ENCODE measurements at regions of chr6 and their contacts with region 1.

Region 1: DNA sequence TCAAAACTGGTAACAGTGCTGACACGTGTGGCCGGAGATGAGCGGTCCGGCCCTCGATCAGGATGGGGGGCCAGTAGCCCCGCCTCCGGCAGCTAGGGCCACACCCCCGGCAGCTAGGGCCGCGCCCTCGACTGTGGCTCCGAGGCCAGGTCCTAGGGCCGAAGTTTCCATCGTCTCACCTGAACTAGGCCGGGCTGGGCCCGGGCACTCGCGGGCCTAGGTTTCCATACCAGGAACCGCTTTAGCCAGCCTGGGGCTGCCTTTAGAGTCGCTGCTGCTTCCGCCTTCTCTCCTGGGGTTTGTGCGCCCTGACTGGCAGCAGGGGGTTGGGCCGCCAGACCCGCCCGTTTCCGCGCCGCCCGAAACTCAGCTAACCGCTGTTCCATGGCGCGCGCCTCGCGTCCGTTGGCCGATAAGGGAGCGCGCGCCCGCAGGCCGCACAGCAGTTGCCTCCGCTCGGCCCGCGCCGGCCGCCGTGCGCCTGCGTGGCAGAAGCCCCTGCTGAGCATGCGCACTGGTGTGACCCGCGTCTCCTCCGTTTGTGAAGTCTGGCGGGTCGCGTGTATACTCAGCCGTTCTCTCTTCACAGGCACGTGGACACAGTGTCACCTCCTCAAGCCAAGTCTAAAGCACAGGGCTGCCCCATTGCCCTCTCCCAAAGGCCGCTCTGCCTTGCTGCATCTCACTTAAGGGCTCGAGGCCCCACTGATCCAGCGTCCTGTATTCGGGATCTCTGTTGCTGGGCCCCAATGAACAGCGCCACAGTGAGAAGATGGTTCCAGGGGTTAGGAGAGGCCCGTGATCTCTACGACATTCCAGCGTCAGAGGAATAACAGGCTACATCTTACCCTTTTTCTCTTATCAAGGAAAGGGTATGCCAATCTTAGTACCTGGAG is at the start of gene SAYSD1:
- DNase-seq: peak; percentile 91 to 97 (median 94)
- ATAC-seq: peak; percentile 92 to 99 (median 98)
- H3K4me3 ChIP-seq: peak within 1 kb of the TSS; percentile 57 to 87 (median 76)
- H3K27ac ChIP-seq: peak within 1 kb of the TSS; percentile 84 to 99 (median 96)
- H3K4me1 ChIP-seq: peaks cover 0 to 30% (median 14%) of the 10 kb centered on the region in 12 donors
- H3K27me3 ChIP-seq: no peaks in the 10 kb centered on the region
- CTCF ChIP-seq: peak in 1 of 12 donors; percentile 6
- POLR2A ChIP-seq: peak in 1 of 2 donors; percentile 75
- total RNA-seq, gene SAYSD1: 6.5 to 14.6 (median 9.2) TPM

Region 2: GRCh38 chr6:38702558-38703397 is 412.2 kb before region 1 on chr6 and contains the start of gene GLO1:
- intact Hi-C with region 1: loop called in 1 of 10 experiments (anchors 10 kb)
- DNase-seq: peak; percentile 97 to 98 (median 98)
- ATAC-seq: peak; percentile 100
- H3K4me3 ChIP-seq: peak within 1 kb of the TSS; percentile 48 to 95 (median 80)
- H3K27ac ChIP-seq: peak within 1 kb of the TSS in 11 of 12 donors; percentile 66 to 96 (median 86)
- H3K4me1 ChIP-seq: peaks cover 0 to 13% (median 1%) of the 10 kb centered on the region in 12 donors
- H3K27me3 ChIP-seq: peaks cover 0 to 3% (median 0%) of the 10 kb centered on the region in 9 donors
- CTCF ChIP-seq: no peak
- POLR2A ChIP-seq: peak; percentile 39 to 95
- total RNA-seq, gene GLO1: 77.8 to 123 (median 86.9) TPM